Left cardiac atrium (tissue), 4 donors: ENCODE measurements at regions of chr1 and their contacts with region 1.

Region 1: GRCh38 chr1:167066333-167067122 is 23.6 kb downstream of the GPA33 start:
- DNase-seq: peak; percentile 77
- ATAC-seq: peak; percentile 91 to 92

Region 2: GRCh38 chr1:167207940-167208623 is 141.6 kb after region 1 on chr1:
- intact Hi-C with region 1: loop called in 1 of 2 experiments (anchors 5 kb)
- DNase-seq: no peak
- ATAC-seq: no peak

Region 3: DNA sequence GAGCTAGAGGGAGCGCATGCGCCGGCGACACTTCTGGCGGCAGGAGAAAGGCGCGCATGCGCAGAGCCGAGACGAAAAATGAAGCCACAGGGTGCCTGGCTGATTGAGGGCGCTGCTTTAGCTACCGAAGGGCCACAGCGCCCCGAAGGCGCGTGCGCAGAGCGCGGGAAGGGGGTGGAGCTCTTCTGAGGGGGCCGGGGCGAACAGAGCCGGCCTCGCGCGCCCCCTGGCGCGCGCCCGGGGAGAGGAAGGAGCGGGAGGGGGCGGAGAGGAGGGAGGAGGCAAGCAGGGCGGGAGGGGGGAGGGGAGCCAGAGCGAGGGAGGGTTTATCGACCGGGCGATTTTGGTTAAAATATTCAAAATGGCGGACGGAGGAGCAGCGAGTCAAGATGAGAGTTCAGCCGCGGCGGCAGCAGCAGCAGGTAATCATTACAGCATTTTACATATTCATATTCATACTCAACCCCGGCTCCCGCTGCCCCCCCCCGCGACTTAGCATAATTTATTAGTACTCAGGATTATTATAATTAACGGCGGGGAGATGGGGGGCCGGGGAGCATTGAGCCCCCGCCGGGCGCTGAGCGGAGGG is 154.1 kb after region 1 on chr1 and contains the start of gene POU2F1:
- intact Hi-C with region 1: loop called in 1 of 2 experiments (anchors 10 kb)
- DNase-seq: peak; percentile 99
- ATAC-seq: peak; percentile 92 to 95
- total RNA-seq, gene POU2F1: 7.6 to 9.5 TPM

Region 4: DNA sequence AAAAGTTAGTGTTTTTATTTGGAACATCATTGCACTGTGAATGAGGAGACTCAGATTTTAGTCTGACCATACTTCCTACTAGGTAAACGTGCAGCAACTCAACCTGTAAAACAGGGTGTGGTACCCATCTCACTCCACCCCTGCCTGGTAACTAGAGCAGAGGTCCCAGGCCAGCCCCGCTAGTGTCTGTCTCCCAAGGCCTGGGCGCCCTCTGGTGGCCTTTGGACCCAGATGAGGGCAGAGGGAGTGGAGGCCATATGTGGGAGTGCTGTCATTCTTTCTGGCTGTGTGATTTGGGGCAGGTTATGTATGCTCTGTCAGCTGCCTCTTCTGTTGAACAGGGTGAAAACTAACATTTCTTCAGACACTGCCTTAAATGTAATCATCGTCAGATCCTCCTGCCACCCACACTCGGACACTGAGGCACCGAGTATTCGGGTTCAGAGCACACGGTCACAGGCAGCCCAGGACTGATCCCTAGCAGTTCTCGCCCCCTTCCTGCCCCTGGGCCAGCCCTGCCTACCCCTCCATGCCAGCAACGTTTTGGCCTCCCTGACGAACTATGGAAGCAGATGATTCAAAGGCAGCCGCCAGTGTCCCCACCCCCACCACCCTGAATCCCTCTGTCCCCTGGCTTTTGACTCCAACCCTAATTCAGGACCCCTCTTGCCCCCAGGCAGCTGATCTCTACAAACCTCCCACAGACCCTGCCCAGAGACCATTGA is 375.8 kb after region 1 on chr1:
- intact Hi-C with region 1: loop called (anchors 2 to 10 kb)
- DNase-seq: peak; percentile 90
- ATAC-seq: peak; percentile 93 to 96